ENCODE measurements at regions of chr7 and their contacts with region 1.

Region 1: GRCh38 chr7:129169171-129169671 is 19.2 kb upstream of the SMO start:
- DNase-seq: peak in 1 of 2 experiments; percentile 84
- H3K4me3 ChIP-seq: peak overlapping the region; percentile 26 to 62 (median 50)
- H3K27ac ChIP-seq: peak overlapping the region; percentile 84
- H3K4me1 ChIP-seq: peaks cover 10 to 17% (median 12%) of the 10 kb centered on the region in 4 experiments
- H3K27me3 ChIP-seq: no peaks in the 10 kb centered on the region; a peak in 1 of 7 replicates
- CTCF ChIP-seq: no peak
- EP300 ChIP-seq: peak in 1 of 2 experiments; percentile 6; a peak in 1 of 3 replicates
- POLR2A ChIP-seq: peak; percentile 38 to 58
- RAD21 ChIP-seq: no peak

Region 2: GRCh38 chr7:129043012-129043411 is 126.2 kb before region 1 on chr7:
- CTCF ChIA-PET with region 1: no interaction called
- POLR2A ChIA-PET with region 1: no interaction called
- DNase-seq: no peak
- H3K4me3 ChIP-seq: no peak overlapping the region
- H3K27ac ChIP-seq: no peak overlapping the region
- H3K4me1 ChIP-seq: peaks cover 0 to 9% (median 4%) of the 10 kb centered on the region in 4 experiments; a peak in 6 of 7 replicates
- H3K27me3 ChIP-seq: no peaks in the 10 kb centered on the region
- CTCF ChIP-seq: no peak
- EP300 ChIP-seq: no peak
- POLR2A ChIP-seq: no peak
- RAD21 ChIP-seq: no peak

Region 3: GRCh38 chr7:129054438-129055293 is 114.6 kb before region 1 on chr7 and contains the start of gene TNPO3:
- CTCF ChIA-PET with region 1: interaction called, 3 read pairs
- POLR2A ChIA-PET with region 1: interaction called, 28 read pairs
- DNase-seq: peak; percentile 83 to 95
- H3K4me3 ChIP-seq: peak within 1 kb of the TSS; percentile 83 to 99 (median 92)
- H3K27ac ChIP-seq: peak within 1 kb of the TSS; percentile 96
- H3K4me1 ChIP-seq: no peaks in the 10 kb centered on the region; a peak in 1 of 7 replicates
- H3K27me3 ChIP-seq: no peaks in the 10 kb centered on the region
- CTCF ChIP-seq: 0 out of 4 replicates have a peak, but pooled peaks of 1 of the 3 experiments have one; percentile 12
- EP300 ChIP-seq: no peak
- POLR2A ChIP-seq: peak; percentile 75 to 99
- RAD21 ChIP-seq: no peak
- total RNA-seq, gene TNPO3: 99.2 and 100 TPM in 2 replicates

Region 4: DNA sequence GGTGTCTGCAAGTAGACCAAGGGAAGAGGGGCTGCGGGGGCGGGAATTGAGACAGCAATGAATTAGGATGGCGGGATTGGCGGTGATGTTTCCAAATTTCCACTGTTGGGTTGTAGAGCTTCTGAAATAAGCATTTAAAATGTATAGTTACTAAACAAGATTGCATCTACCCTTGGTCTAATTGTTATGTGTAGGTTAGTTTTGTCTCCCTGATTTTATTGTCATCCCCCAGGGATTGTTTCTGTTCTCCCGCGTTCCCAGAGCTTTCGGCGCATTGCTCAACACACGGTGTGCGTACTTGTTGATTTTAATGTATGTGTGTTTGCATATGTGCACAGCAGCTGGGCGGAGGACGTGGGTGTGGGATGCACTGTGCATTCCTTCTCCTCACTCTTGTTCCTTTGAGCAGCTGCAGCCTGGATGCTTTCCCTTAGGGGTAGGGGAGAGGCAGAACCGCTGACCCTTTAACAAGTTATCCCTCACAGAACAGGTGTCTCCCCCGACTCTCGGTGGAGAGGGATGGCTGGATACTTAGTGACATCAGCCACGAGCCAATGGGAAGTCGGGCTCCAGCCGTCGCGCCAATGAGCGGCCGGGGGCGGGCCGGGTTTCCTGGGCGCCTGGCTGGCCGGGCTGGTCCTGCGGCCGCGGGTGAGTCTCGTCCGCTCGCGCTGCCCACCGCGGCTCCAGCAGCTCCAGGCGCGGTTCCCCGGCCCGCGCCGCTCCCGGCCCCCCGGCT is 25.0 kb before region 1 on chr7 and contains the start of gene TSPAN33:
- CTCF ChIA-PET with region 1: interaction called, 27 read pairs
- POLR2A ChIA-PET with region 1: interaction called, 11 read pairs
- DNase-seq: peak in 1 of 2 experiments; percentile 88
- H3K4me3 ChIP-seq: peak within 1 kb of the TSS; percentile 43 to 99 (median 55)
- H3K27ac ChIP-seq: no peak within 1 kb of the TSS
- H3K4me1 ChIP-seq: peaks cover 0 to 4% (median 2%) of the 10 kb centered on the region in 4 experiments; a peak in 4 of 7 replicates
- H3K27me3 ChIP-seq: peaks cover 0 to 10% (median 3%) of the 10 kb centered on the region in 4 experiments; a peak in 4 of 7 replicates
- CTCF ChIP-seq: no peak
- EP300 ChIP-seq: no peak
- POLR2A ChIP-seq: no peak
- RAD21 ChIP-seq: no peak
- total RNA-seq, gene TSPAN33: 47.1 TPM in 2 replicates

Region 5: DNA sequence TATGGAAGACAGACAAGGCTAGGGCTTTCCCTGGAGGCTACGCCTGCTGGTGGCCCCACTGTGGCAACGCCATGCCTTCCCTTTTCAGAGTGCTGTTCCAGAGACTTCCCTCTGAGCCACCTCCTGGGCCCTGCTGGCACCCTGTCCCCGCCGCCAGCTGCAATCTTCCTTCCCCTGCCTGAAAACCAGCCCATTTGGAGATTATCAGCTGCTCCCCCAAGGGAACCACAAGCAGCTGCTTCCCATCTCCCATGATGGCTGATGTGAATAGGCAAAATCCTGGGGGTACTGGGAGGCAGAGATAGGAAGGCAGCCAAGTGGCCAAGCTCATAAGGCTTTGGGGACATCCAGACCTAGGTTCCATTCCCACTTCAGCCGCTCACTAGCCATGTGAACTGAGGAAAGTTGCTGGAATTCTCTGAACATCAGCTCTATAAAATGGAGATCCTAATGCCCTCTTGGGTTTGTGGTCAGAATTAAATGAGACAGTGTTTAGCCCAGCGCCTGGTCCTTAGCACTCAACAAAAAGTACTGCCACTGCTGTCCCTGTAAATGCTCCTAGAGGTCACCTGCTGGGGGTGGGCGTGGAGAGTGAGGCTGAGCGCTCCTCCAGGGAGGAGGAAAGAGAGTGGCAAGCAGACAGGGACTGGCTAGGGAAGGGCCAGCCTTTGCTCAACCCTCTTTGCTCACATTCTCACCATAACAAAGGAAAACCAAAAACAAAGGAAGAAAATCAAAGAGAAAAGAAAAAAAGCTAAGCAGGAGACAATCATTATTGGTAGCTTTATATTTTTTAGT is 18.8 kb before region 1 on chr7:
- CTCF ChIA-PET with region 1: interaction called, 27 read pairs
- POLR2A ChIA-PET with region 1: interaction called, 12 read pairs
- DNase-seq: no peak
- H3K4me3 ChIP-seq: no peak overlapping the region
- H3K27ac ChIP-seq: no peak overlapping the region
- H3K4me1 ChIP-seq: peaks cover 6 to 14% (median 7%) of the 10 kb centered on the region in 4 experiments
- H3K27me3 ChIP-seq: no peaks in the 10 kb centered on the region
- CTCF ChIP-seq: no peak
- EP300 ChIP-seq: no peak
- POLR2A ChIP-seq: no peak
- RAD21 ChIP-seq: no peak

Region 6: DNA sequence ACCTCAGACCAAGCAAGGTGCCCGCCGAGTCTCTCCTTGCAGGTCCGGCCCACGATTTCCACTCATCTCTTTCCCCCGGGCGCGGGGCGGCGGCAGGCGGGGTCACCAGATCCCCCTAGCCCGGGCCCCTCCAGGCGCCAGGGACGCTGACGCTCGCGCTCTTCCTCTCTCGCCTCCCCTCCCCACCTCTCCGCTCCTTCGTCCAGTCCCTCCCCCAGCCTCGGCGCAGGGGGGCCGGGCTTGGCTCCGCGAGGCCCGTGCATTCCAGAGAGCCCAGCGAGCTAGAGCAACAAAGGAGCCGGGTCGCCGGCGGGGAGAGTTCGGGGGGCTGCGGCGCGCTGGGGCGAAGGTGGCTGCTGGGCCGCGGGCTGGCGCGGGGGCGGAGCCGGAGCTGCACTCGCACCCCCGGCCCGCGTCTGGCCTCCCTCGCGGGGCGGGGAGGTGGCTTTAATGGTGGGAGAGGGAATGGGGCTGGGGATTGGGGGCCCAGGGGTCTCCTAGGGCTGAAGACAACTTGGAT is 19.2 kb after region 1 on chr7 and contains the start of gene SMO:
- CTCF ChIA-PET with region 1: interaction called, 26 read pairs
- POLR2A ChIA-PET with region 1: interaction called, 116 read pairs
- DNase-seq: peak; percentile 54 to 91
- H3K4me3 ChIP-seq: peak within 1 kb of the TSS; percentile 80 to 99 (median 90)
- H3K27ac ChIP-seq: peak within 1 kb of the TSS; percentile 48; the same call in 1 of the 2 replicates
- H3K4me1 ChIP-seq: peaks cover 4 to 12% (median 9%) of the 10 kb centered on the region in 4 experiments; a peak in 6 of 7 replicates
- H3K27me3 ChIP-seq: peaks cover 0 to 12% (median 6%) of the 10 kb centered on the region in 4 experiments; a peak in 4 of 7 replicates
- CTCF ChIP-seq: no peak
- EP300 ChIP-seq: peak in 1 of 2 experiments; percentile 76; a peak in 1 of 3 replicates
- POLR2A ChIP-seq: peak; percentile 90 to 93
- RAD21 ChIP-seq: no peak; a peak in 1 of 4 replicates
- total RNA-seq, gene SMO: 61.2 and 64.5 TPM in 2 replicates

Region 7: GRCh38 chr7:129193892-129194291 is 24.7 kb after region 1 on chr7:
- CTCF ChIA-PET with region 1: interaction called, 26 read pairs
- POLR2A ChIA-PET with region 1: interaction called, 116 read pairs
- DNase-seq: no peak
- H3K4me3 ChIP-seq: no peak overlapping the region
- H3K27ac ChIP-seq: no peak overlapping the region
- H3K4me1 ChIP-seq: peaks cover 3 to 7% (median 5%) of the 10 kb centered on the region in 4 experiments; a peak in 6 of 7 replicates
- H3K27me3 ChIP-seq: no peaks in the 10 kb centered on the region
- CTCF ChIP-seq: no peak
- EP300 ChIP-seq: no peak
- POLR2A ChIP-seq: no peak
- RAD21 ChIP-seq: no peak

Region 8: GRCh38 chr7:129210256-129210988 is 41.2 kb after region 1 on chr7:
- CTCF ChIA-PET with region 1: interaction called, 258 read pairs
- POLR2A ChIA-PET with region 1: interaction called, 12 read pairs
- DNase-seq: peak; percentile 41 to 98
- H3K4me3 ChIP-seq: no peak overlapping the region
- H3K27ac ChIP-seq: no peak overlapping the region
- H3K4me1 ChIP-seq: no peaks in the 10 kb centered on the region
- H3K27me3 ChIP-seq: no peaks in the 10 kb centered on the region
- CTCF ChIP-seq: peak; percentile 93 to 97 (median 94)
- EP300 ChIP-seq: no peak
- POLR2A ChIP-seq: no peak
- RAD21 ChIP-seq: peak; percentile 93 to 96